Ascending aorta (tissue), 2 donors: ENCODE measurements at regions of chr19 and their contacts with region 1.

Region 1: GRCh38 chr19:57279418-57280066 is 743 bp upstream of the ZNF460 start:
- DNase-seq: peak; percentile 81 to 96
- H3K4me3 ChIP-seq: peak overlapping the region; percentile 93 to 98
- H3K27ac ChIP-seq: peak overlapping the region; percentile 99 to 100
- H3K4me1 ChIP-seq: peaks cover 11 to 12% of the 10 kb centered on the region in 2 donors
- H3K27me3 ChIP-seq: no peaks in the 10 kb centered on the region
- CTCF ChIP-seq: peak in 2 of 3 experiments; percentile 8 to 43

Region 2: DNA sequence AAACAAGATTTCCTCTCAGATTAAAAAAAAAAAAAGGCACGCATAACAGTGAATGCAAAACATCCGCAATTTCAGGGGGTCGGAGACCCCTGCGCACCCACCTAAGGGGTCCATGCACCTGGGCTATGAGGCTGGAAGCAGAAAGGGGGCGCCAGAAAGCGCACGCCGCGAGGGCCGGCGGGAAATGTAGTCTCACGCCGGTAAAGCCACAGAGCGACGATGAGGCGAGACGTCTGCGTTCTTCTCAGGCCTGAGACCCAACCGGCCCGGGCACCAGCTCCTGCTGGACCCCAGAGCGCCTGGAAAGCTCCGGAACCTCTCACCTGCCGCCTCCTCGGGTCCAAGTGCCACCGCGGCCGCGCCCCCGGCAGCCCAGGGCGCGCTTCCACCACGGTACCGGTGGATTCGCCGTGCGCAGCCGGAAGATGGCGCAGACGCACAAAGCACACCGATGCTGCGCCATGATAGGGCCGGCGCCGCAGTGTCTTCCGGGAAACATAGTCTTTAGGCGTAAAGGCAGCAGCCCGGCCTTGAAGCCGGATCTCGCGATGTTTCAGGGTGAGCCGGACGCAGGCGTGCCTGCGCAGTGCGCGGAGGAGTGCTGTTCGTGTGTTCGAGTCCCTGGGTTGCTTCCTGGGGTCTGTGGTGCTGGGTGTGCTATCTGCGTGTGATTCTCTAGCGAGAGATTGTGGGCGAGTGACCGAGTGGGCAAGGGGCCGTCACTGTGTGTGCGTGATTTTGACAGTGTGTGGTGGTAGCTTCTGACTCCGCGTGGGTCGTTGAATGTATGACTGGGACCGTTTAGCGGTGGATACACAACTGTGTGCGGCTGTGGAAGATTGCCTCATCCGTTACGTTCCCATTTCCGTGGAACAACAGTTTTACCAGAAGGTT is 886.2 kb before region 1 on chr19 and contains the start of gene ZNF582:
- intact Hi-C with region 1: loop called (anchors 5 kb)
- DNase-seq: peak; percentile 89 to 98
- H3K4me3 ChIP-seq: peak within 1 kb of the TSS; percentile 67 to 85
- H3K27ac ChIP-seq: peak within 1 kb of the TSS; percentile 91 to 93
- H3K4me1 ChIP-seq: peaks cover 0 to 3% of the 10 kb centered on the region in 2 donors
- H3K27me3 ChIP-seq: no peaks in the 10 kb centered on the region
- CTCF ChIP-seq: peak; percentile 49 to 80 (median 69)
- total RNA-seq, gene ZNF582: 0.43 TPM

Region 3: GRCh38 chr19:57161985-57162539 is 117.5 kb before region 1 on chr19:
- intact Hi-C with region 1: no loop called
- DNase-seq: no peak
- H3K4me3 ChIP-seq: no peak overlapping the region
- H3K27ac ChIP-seq: peak overlapping the region; percentile 15 to 23
- H3K4me1 ChIP-seq: no peaks in the 10 kb centered on the region
- H3K27me3 ChIP-seq: no peaks in the 10 kb centered on the region
- CTCF ChIP-seq: no peak

Region 4: GRCh38 chr19:57240311-57241090 is 39.0 kb before region 1 on chr19 and contains the start of gene ZNF805:
- intact Hi-C with region 1: loop called (anchors 1 kb)
- DNase-seq: peak; percentile 80 to 97
- H3K4me3 ChIP-seq: peak within 1 kb of the TSS; percentile 84 to 91
- H3K27ac ChIP-seq: peak within 1 kb of the TSS; percentile 87 to 97
- H3K4me1 ChIP-seq: peaks cover 0 to 8% of the 10 kb centered on the region in 2 donors
- H3K27me3 ChIP-seq: no peaks in the 10 kb centered on the region
- CTCF ChIP-seq: peak in 1 of 3 experiments; percentile 13
- total RNA-seq, gene ZNF805: 22.8 TPM

Region 5: GRCh38 chr19:57350877-57351805 is 71.6 kb after region 1 on chr19 and contains the start of gene ZNF304:
- intact Hi-C with region 1: loop called (anchors 5 kb)
- DNase-seq: peak; percentile 79 to 95
- H3K4me3 ChIP-seq: peak within 1 kb of the TSS; percentile 71 to 75
- H3K27ac ChIP-seq: peak within 1 kb of the TSS; percentile 56 to 72
- H3K4me1 ChIP-seq: peaks cover 0 to 8% of the 10 kb centered on the region in 2 donors
- H3K27me3 ChIP-seq: no peaks in the 10 kb centered on the region
- CTCF ChIP-seq: no peak
- total RNA-seq, gene ZNF304: 5.9 TPM

Region 6: DNA sequence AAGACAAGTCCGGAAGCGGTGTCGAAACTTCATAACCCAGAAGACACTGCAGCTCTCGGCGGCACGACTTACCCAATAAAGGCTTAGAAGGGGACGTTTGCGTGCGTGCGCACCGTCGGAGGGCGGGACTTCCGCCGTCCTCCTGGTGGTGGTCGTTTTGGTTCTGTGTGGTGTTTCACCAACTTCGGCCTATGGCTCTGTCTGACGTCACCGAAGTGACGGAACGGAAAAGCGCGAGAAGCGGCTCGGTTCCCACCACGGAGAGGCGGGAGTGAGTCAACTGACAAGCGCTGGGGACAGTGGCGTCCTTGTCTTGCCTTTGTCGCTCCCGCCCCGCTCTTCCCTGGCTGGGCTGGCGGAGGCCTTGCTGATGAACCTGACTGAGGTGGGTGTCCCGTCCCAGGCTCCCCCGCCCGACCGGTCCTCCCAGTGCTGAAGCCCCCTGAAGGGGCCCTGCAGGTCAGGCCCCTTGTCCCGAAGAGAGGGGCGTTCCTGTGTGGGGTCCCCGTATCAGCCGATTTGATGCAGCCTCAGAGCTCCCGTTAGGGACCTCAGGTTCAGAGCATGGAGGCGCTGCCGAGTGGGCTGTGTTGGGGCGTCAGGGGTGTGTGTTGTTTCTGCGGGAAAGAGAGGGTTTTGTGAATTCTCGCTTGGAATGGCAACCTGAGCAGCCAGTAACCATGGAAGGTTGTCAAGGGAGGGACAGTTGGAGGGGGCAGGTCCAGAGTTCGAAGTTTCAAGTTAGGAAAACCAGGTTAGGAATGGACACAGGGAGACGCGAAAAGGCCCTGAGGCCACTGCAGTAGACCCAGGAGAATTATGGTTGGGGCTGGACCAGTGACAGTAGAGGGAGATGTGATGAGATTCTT is 110.4 kb after region 1 on chr19 and contains the start of gene ZNF548:
- intact Hi-C with region 1: loop called (anchors 1 kb)
- DNase-seq: peak; percentile 97 to 99
- H3K4me3 ChIP-seq: peak within 1 kb of the TSS; percentile 72 to 80
- H3K27ac ChIP-seq: peak within 1 kb of the TSS; percentile 93
- H3K4me1 ChIP-seq: peaks cover 0 to 10% of the 10 kb centered on the region in 2 donors
- H3K27me3 ChIP-seq: no peaks in the 10 kb centered on the region
- CTCF ChIP-seq: peak in 2 of 3 experiments; percentile 15 to 35
- total RNA-seq, gene ZNF548: 0.96 TPM